Ovary (tissue), 10 donors: ENCODE measurements at regions of chr11 and their contacts with region 1.

Region 1: GRCh38 chr11:84497981-84498411 is 1129.1 kb downstream of the DLG2 start:
- DNase-seq: peak in 1 of 5 donors; percentile 16
- H3K4me3 ChIP-seq: no peak overlapping the region
- H3K27ac ChIP-seq: no peak overlapping the region
- H3K4me1 ChIP-seq: no peaks in the 10 kb centered on the region
- H3K27me3 ChIP-seq: no peaks in the 10 kb centered on the region
- CTCF ChIP-seq: no peak
- EP300 ChIP-seq: no peak
- POLR2A ChIP-seq: no peak

Region 2: GRCh38 chr11:84522331-84522730 is 24.3 kb after region 1 on chr11:
- intact Hi-C with region 1: no loop called
- DNase-seq: no peak
- H3K4me3 ChIP-seq: no peak overlapping the region
- H3K27ac ChIP-seq: no peak overlapping the region
- H3K4me1 ChIP-seq: peaks cover 1% of the 10 kb centered on the region
- H3K27me3 ChIP-seq: no peaks in the 10 kb centered on the region
- CTCF ChIP-seq: no peak
- EP300 ChIP-seq: no peak
- POLR2A ChIP-seq: no peak

Region 3: GRCh38 chr11:84532364-84532763 is 34.4 kb after region 1 on chr11:
- intact Hi-C with region 1: loop called in 1 of 4 experiments (anchors 1 kb)
- DNase-seq: no peak
- H3K4me3 ChIP-seq: no peak overlapping the region
- H3K27ac ChIP-seq: no peak overlapping the region
- H3K4me1 ChIP-seq: no peaks in the 10 kb centered on the region
- H3K27me3 ChIP-seq: no peaks in the 10 kb centered on the region
- CTCF ChIP-seq: no peak
- EP300 ChIP-seq: no peak
- POLR2A ChIP-seq: no peak

Region 4: GRCh38 chr11:84626256-84626655 is 128.3 kb after region 1 on chr11:
- intact Hi-C with region 1: no loop called
- DNase-seq: no peak
- H3K4me3 ChIP-seq: no peak overlapping the region
- H3K27ac ChIP-seq: no peak overlapping the region
- H3K4me1 ChIP-seq: no peaks in the 10 kb centered on the region
- H3K27me3 ChIP-seq: no peaks in the 10 kb centered on the region
- CTCF ChIP-seq: no peak
- EP300 ChIP-seq: no peak
- POLR2A ChIP-seq: no peak